ENCODE measurements at regions of chr6 and their contacts with region 1.

Region 1: DNA sequence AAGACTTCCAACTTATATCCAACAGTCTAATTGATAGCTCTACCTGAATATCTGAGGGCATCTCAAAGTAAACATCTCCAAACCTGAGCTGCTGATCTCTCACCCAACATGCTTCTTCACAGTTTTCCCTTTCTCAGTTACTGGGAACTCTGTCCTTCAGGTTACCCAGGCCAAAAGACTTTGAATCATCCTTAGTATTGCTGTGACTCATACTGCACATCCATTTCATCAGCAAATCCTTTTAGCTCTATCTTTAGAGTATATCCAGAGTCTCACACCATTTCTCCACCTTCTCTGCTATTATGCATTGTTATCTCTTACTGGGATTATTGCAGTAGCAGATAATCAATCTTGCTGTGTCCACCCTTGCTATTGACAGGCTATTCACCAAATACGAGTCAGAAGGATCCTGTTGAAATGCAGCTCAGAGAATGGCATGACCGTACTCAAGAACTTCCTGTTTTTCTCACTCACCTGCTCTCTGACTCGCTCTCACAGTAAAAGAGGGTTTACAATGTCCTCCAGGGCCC is 57.3 kb downstream of the BCKDHB start:
- DNase-seq: peak; percentile 18
- H3K4me3 Mint-ChIP-seq: no peak overlapping the region
- H3K27ac Mint-ChIP-seq: no peak overlapping the region
- H3K4me1 Mint-ChIP-seq: no peaks in the 10 kb centered on the region
- H3K27me3 Mint-ChIP-seq: no peaks in the 10 kb centered on the region

Region 2: DNA sequence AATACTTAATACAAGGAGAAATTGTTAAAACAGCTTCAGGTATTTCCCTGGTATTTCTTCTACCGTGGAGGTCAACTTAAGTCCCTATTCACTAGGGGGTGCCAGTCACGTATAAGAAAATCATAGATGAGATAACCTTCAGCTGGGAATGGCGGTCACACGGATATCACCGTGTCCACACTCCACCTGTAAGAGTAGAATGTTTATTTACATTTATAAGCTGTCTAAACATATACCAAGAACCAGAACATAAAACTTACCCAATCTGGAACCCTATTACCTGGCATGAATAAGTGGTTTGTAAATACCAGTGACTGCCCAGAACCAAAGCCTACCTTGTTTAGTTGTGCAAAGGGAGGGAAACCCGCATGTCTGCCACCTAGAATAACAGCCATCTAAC is 214.5 kb before region 1 on chr6:
- CTCF ChIA-PET with region 1: interaction called, 3 read pairs
- intact Hi-C with region 1: loop called (anchors 2 kb)
- DNase-seq: peak; percentile 83
- H3K4me3 Mint-ChIP-seq: no peak overlapping the region
- H3K27ac Mint-ChIP-seq: no peak overlapping the region
- H3K4me1 Mint-ChIP-seq: peaks cover 14% of the 10 kb centered on the region
- H3K27me3 Mint-ChIP-seq: peaks cover 34% of the 10 kb centered on the region

Region 3: GRCh38 chr6:80004173-80005072 is 159.3 kb before region 1 on chr6 and contains the start of gene TTK:
- CTCF ChIA-PET with region 1: no interaction called
- intact Hi-C with region 1: loop called (anchors 2 kb)
- DNase-seq: peak; percentile 93
- H3K4me3 Mint-ChIP-seq: peak within 1 kb of the TSS; percentile 95
- H3K27ac Mint-ChIP-seq: peak within 1 kb of the TSS; percentile 89
- H3K4me1 Mint-ChIP-seq: peaks cover 16% of the 10 kb centered on the region
- H3K27me3 Mint-ChIP-seq: peaks cover 1% of the 10 kb centered on the region
- total RNA-seq, gene TTK: 45.9 to 51.1 TPM

Region 4: DNA sequence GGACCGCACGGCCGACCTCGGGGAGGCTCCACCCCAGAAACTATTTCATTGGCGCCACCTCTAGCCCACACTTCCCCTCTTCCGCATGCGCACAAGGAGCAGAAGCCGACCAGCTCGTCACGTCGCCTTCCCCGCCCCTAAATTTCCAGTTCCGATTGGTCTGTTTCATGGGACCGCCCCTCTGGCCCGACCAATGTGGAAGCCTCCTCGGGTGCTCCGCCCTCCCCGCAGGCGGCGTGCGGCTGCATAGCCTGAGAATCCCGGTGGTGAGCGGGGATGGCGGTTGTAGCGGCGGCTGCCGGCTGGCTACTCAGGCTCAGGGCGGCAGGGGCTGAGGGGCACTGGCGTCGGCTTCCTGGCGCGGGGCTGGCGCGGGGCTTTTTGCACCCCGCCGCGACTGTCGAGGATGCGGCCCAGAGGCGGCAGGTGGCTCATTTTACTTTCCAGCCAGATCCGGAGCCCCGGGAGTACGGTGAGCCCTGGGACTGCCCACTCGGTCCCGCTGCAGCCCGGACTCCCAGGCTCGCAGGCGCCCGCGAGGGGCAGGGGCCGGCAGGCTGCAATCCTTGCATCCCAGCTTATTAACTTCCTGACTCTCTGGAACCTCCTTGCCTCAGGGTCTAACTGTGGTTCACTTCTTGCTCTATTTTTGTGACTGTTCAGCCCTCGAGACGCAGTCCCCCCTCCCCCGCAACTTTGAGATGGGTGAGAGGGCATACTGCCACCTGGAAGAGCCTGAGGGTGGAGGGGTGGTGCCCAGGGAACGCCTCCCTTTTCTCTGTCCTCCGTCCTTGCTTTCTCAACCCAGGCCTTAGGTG is 57.1 kb before region 1 on chr6 and contains the start of gene BCKDHB:
- CTCF ChIA-PET with region 1: no interaction called
- intact Hi-C with region 1: loop called (anchors 1 kb)
- DNase-seq: peak; percentile 99
- H3K4me3 Mint-ChIP-seq: peak within 1 kb of the TSS; percentile 90
- H3K27ac Mint-ChIP-seq: peak within 1 kb of the TSS; percentile 84
- H3K4me1 Mint-ChIP-seq: peaks cover 10% of the 10 kb centered on the region
- H3K27me3 Mint-ChIP-seq: no peaks in the 10 kb centered on the region
- total RNA-seq, gene BCKDHB: 15.5 to 18.5 TPM

Region 5: DNA sequence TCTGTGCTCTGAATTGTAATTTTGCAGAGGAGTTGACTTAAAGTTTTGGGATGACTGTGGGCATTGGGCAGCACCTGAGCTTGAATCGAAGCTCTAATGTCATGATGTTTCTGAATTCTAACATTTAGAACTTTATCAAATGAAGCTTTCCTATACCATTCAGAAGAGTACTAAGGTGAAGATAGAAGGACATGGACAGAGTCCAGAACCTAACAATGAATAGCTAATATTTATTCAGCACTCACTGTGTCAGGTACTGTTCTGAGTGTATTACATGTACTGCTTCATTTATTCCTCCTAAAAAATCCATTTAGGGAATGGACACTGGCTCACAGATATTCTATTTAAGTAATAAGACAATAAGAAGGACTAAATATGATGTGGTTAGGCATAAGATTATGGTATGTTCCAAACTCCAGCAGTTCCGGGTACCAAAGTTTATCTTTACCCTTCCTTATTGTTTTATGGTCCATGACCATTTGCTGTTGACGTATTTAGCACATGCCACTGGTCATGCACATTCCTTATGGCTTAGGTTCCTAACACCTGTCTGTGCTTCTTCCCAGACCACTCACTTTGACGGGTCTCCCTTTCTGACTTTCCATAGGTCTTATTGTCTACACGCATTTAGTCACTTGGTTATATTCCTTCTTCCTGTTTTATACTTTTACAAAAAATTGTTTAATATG is 36.9 kb before region 1 on chr6:
- CTCF ChIA-PET with region 1: no interaction called
- intact Hi-C with region 1: no loop called
- DNase-seq: no peak
- H3K4me3 Mint-ChIP-seq: no peak overlapping the region
- H3K27ac Mint-ChIP-seq: no peak overlapping the region
- H3K4me1 Mint-ChIP-seq: no peaks in the 10 kb centered on the region
- H3K27me3 Mint-ChIP-seq: no peaks in the 10 kb centered on the region

Region 6: GRCh38 chr6:80234401-80234800 is 70.7 kb after region 1 on chr6:
- CTCF ChIA-PET with region 1: no interaction called
- intact Hi-C with region 1: no loop called
- DNase-seq: no peak
- H3K4me3 Mint-ChIP-seq: no peak overlapping the region
- H3K27ac Mint-ChIP-seq: no peak overlapping the region
- H3K4me1 Mint-ChIP-seq: no peaks in the 10 kb centered on the region
- H3K27me3 Mint-ChIP-seq: no peaks in the 10 kb centered on the region

Region 7: GRCh38 chr6:80280262-80281010 is 116.7 kb after region 1 on chr6:
- CTCF ChIA-PET with region 1: no interaction called
- intact Hi-C with region 1: loop called (anchors 5 kb)
- DNase-seq: no peak
- H3K4me3 Mint-ChIP-seq: no peak overlapping the region
- H3K27ac Mint-ChIP-seq: no peak overlapping the region
- H3K4me1 Mint-ChIP-seq: peaks cover 18% of the 10 kb centered on the region
- H3K27me3 Mint-ChIP-seq: no peaks in the 10 kb centered on the region

Region 8: GRCh38 chr6:81727876-81728517 is 1564.3 kb after region 1 on chr6:
- CTCF ChIA-PET with region 1: no interaction called
- intact Hi-C with region 1: loop called (anchors 10 kb)
- DNase-seq: peak; percentile 48
- H3K4me3 Mint-ChIP-seq: no peak overlapping the region
- H3K27ac Mint-ChIP-seq: no peak overlapping the region
- H3K4me1 Mint-ChIP-seq: peaks cover 11% of the 10 kb centered on the region
- H3K27me3 Mint-ChIP-seq: no peaks in the 10 kb centered on the region